ENCODE measurements at regions of chr10 and their contacts with region 1.

Region 1: GRCh38 chr10:126670895-126671261 is 385 bp upstream of the C10orf90 start:
- DNase-seq: peak; percentile 68 to 97 (median 84)

Region 2: GRCh38 chr10:126749015-126749655 is 78.3 kb after region 1 on chr10:
- intact Hi-C with region 1: loop called (anchors 5 kb)
- DNase-seq: peak; percentile 27 to 96 (median 81)

Region 3: GRCh38 chr10:127102171-127102570 is 431.3 kb after region 1 on chr10:
- intact Hi-C with region 1: no loop called
- DNase-seq: no peak